CD4-positive, alpha-beta memory T cell (primary cell): ENCODE measurements at regions of chr11 and their contacts with region 1.

Region 1: GRCh38 chr11:65418711-65419459 is 3.7 kb upstream of the NEAT1 start:
- DNase-seq: peak; percentile 64 to 87 (median 70)
- H3K4me3 ChIP-seq: peak overlapping the region; percentile 86 to 95
- H3K4me3 Mint-ChIP-seq: peak overlapping the region; percentile 92 to 97 (median 95)
- H3K27ac ChIP-seq: peak overlapping the region; percentile 98
- H3K27ac Mint-ChIP-seq: peak overlapping the region; percentile 93 to 100 (median 97)
- H3K4me1 ChIP-seq: peaks cover 57% of the 10 kb centered on the region
- H3K4me1 Mint-ChIP-seq: peaks cover 30 to 72% (median 42%) of the 10 kb centered on the region in 4 donors
- H3K27me3 ChIP-seq: no peaks in the 10 kb centered on the region
- H3K27me3 Mint-ChIP-seq: peaks cover 0 to 4% of the 10 kb centered on the region in 2 donors

Region 2: DNA sequence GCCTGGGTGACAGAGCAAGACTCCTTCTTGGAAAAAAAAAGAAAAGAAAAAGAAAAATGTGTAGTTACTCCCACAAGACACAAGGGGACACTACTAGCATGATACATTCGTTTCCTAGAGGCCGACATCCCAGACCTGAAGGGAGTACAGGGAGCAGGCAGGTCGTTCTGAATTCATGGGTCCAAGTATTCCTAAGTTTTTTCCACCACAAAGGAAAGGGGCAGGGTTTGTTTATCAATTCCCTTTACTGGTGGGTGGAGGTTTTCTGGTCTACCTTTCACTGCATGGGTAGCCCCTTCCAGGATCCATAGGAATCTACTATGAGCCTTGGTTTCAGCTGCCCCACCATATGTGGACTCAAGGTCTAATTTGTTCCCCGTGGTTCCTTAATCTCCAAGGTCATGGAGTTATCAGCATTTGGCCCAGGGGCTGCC is 52.5 kb before region 1 on chr11:
- CTCF ChIA-PET with region 1: interaction called, 3 read pairs
- POLR2A ChIA-PET with region 1: interaction called, 4 read pairs
- intact Hi-C with region 1: loop called (anchors 5 kb)
- DNase-seq: peak; percentile 59 to 69 (median 64)
- H3K4me3 ChIP-seq: no peak overlapping the region
- H3K4me3 Mint-ChIP-seq: no peak overlapping the region
- H3K27ac ChIP-seq: no peak overlapping the region
- H3K27ac Mint-ChIP-seq: no peak overlapping the region
- H3K4me1 ChIP-seq: no peaks in the 10 kb centered on the region
- H3K4me1 Mint-ChIP-seq: peaks cover 0 to 3% (median 1%) of the 10 kb centered on the region in 4 donors
- H3K27me3 ChIP-seq: no peaks in the 10 kb centered on the region
- H3K27me3 Mint-ChIP-seq: no peaks in the 10 kb centered on the region

Region 3: DNA sequence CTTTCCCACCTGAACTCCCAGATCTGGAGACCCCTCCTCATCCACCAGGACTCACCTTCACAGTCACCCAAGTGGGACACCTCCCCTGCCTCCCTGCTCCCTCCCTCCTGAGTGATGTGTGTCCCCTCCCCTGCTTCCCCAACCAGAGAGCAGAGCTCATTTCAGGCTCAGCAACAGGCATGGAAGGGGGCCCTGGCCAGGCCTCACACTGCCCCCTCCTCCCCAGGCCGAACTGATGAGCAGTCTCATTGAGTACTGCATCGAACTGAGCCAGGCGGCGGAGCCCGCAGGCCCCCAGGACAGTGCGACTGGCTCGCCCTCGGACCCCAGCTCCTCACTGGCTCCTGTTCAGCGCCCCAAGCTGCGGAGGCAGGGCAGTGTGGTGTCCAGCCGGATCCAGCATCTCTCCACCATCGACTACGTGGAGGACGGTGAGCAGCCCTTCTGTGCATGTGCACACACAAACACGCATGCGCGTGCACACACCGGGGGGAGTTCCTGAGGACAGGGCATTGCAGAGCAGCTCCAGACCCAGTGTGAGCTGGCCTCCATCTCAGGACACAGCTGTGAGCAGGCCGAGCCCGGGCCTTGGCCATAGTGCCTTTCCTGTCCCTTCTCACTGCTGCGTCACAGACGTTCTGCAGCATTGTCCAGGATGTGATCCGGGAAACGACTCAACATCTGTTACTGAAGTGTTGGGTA is 14.1 kb before region 1 on chr11:
- CTCF ChIA-PET with region 1: interaction called, 10 read pairs
- POLR2A ChIA-PET with region 1: interaction called, 7 read pairs
- intact Hi-C with region 1: no loop called
- DNase-seq: peak in 1 of 5 donors; percentile 12
- H3K4me3 ChIP-seq: no peak overlapping the region
- H3K4me3 Mint-ChIP-seq: no peak overlapping the region
- H3K27ac ChIP-seq: no peak overlapping the region
- H3K27ac Mint-ChIP-seq: peak overlapping the region in 1 of 7 donors; percentile 57
- H3K4me1 ChIP-seq: no peaks in the 10 kb centered on the region
- H3K4me1 Mint-ChIP-seq: peaks cover 0 to 6% (median 1%) of the 10 kb centered on the region in 4 donors
- H3K27me3 ChIP-seq: no peaks in the 10 kb centered on the region
- H3K27me3 Mint-ChIP-seq: no peaks in the 10 kb centered on the region

Region 4: GRCh38 chr11:65440831-65441499 is 22.1 kb after region 1 on chr11:
- CTCF ChIA-PET with region 1: interaction called, 17 read pairs
- POLR2A ChIA-PET with region 1: interaction called, 224 read pairs
- intact Hi-C with region 1: no loop called
- DNase-seq: no peak
- H3K4me3 ChIP-seq: no peak overlapping the region
- H3K4me3 Mint-ChIP-seq: peak overlapping the region in 6 of 8 donors; percentile 22 to 72 (median 60)
- H3K27ac ChIP-seq: peak overlapping the region; percentile 32
- H3K27ac Mint-ChIP-seq: peak overlapping the region; percentile 24 to 98 (median 83)
- H3K4me1 ChIP-seq: peaks cover 47% of the 10 kb centered on the region
- H3K4me1 Mint-ChIP-seq: peaks cover 33 to 79% (median 56%) of the 10 kb centered on the region in 4 donors
- H3K27me3 ChIP-seq: no peaks in the 10 kb centered on the region
- H3K27me3 Mint-ChIP-seq: no peaks in the 10 kb centered on the region

Region 5: GRCh38 chr11:65454696-65455456 is 36.0 kb after region 1 on chr11:
- CTCF ChIA-PET with region 1: interaction called, 9 read pairs
- POLR2A ChIA-PET with region 1: interaction called, 679 read pairs
- intact Hi-C with region 1: no loop called
- DNase-seq: peak; percentile 55 to 76 (median 64)
- H3K4me3 ChIP-seq: peak overlapping the region; percentile 78 to 84
- H3K4me3 Mint-ChIP-seq: peak overlapping the region; percentile 85 to 91 (median 88)
- H3K27ac ChIP-seq: peak overlapping the region; percentile 64
- H3K27ac Mint-ChIP-seq: peak overlapping the region; percentile 84 to 97 (median 89)
- H3K4me1 ChIP-seq: peaks cover 12% of the 10 kb centered on the region
- H3K4me1 Mint-ChIP-seq: peaks cover 11 to 34% (median 16%) of the 10 kb centered on the region in 4 donors
- H3K27me3 ChIP-seq: no peaks in the 10 kb centered on the region
- H3K27me3 Mint-ChIP-seq: no peaks in the 10 kb centered on the region

Region 6: GRCh38 chr11:65477149-65477965 is 58.5 kb after region 1 on chr11:
- CTCF ChIA-PET with region 1: interaction called, 88 read pairs
- POLR2A ChIA-PET with region 1: interaction called, 679 read pairs
- intact Hi-C with region 1: loop called (anchors 2 kb)
- DNase-seq: peak; percentile 78 to 90 (median 82)
- H3K4me3 ChIP-seq: peak overlapping the region; percentile 90 to 93
- H3K4me3 Mint-ChIP-seq: peak overlapping the region; percentile 95 to 100 (median 100)
- H3K27ac ChIP-seq: peak overlapping the region; percentile 93
- H3K27ac Mint-ChIP-seq: peak overlapping the region; percentile 97 to 100 (median 99)
- H3K4me1 ChIP-seq: peaks cover 20% of the 10 kb centered on the region
- H3K4me1 Mint-ChIP-seq: peaks cover 10 to 26% (median 17%) of the 10 kb centered on the region in 4 donors
- H3K27me3 ChIP-seq: no peaks in the 10 kb centered on the region
- H3K27me3 Mint-ChIP-seq: no peaks in the 10 kb centered on the region